SK-N-SH (cell line): ENCODE measurements at regions of chr18 and their contacts with region 1.

Region 1: GRCh38 chr18:62584241-62585120 is 61.7 kb downstream of the ZCCHC2 start:
- DNase-seq: peak; percentile 88
- H3K4me3 ChIP-seq: peak overlapping the region; percentile 23 to 33
- H3K27ac ChIP-seq: peak overlapping the region in 1 of 2 experiments; percentile 53; a peak in 1 of 4 replicates
- H3K4me1 ChIP-seq: peaks cover 3 to 9% of the 10 kb centered on the region in 2 experiments; a peak in 2 of 4 replicates
- H3K27me3 ChIP-seq: no peaks in the 10 kb centered on the region
- CTCF ChIP-seq: peak; percentile 99
- EP300 ChIP-seq: no peak
- RAD21 ChIP-seq: peak; percentile 90

Region 2: GRCh38 chr18:62118328-62118727 is 466.2 kb before region 1 on chr18:
- CTCF ChIA-PET with region 1: no interaction called
- POLR2A ChIA-PET with region 1: no interaction called
- DNase-seq: no peak
- H3K4me3 ChIP-seq: no peak overlapping the region
- H3K27ac ChIP-seq: peak overlapping the region in 1 of 2 experiments; percentile 6; a peak in 1 of 4 replicates
- H3K4me1 ChIP-seq: no peaks in the 10 kb centered on the region
- H3K27me3 ChIP-seq: no peaks in the 10 kb centered on the region
- CTCF ChIP-seq: no peak
- EP300 ChIP-seq: no peak
- RAD21 ChIP-seq: no peak

Region 3: DNA sequence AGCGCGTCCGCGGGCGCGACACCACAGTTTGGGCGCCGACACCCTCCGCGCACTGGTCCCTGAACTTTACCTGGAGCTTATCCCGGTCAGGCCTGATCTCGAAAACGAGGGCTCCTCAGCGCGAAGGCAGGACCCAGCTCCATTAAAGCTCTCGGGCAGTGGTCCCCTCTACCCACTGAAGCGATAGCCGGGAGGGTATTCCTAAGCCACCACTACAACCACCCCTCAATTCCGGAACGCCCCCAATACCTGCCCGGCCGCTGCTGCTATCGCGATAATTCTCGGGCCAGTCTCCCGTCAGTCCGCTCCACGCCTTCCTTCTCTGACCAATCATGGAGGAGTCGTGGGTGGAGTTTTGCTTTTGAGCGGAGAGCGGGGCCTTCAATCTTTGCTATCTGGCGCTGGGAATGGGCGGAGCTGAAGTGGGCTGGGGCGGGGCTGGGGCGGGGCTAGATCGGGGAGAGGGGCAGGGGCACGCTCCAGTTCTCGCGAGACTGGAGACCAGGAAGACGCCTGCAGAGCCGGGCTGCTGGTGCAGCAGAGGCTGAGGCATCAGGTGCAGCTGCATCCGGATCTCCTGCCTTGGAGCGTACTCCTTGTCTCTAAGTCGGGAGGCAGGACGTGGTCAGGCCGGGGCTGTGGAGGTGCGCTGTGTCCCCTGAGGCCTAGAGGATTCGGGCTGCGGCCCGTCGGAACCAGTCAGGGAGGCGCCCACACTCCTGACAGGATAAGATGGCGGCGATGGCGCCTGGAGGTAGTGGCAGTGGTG is 397.5 kb before region 1 on chr18 and contains the starts of genes PIGN and RELCH:
- CTCF ChIA-PET with region 1: interaction called, 13 read pairs
- POLR2A ChIA-PET with region 1: no interaction called
- DNase-seq: peak; percentile 95
- H3K4me3 ChIP-seq: peak within 1 kb of the TSS; percentile 97 to 100
- H3K27ac ChIP-seq: peak within 1 kb of the TSS; percentile 66 to 89
- H3K4me1 ChIP-seq: peaks cover 9 to 17% of the 10 kb centered on the region in 2 experiments; a peak in 3 of 4 replicates
- H3K27me3 ChIP-seq: no peaks in the 10 kb centered on the region
- CTCF ChIP-seq: no peak
- EP300 ChIP-seq: no peak
- RAD21 ChIP-seq: no peak
- polyA plus RNA-seq, gene PIGN: 6.1 and 10.4 TPM in 2 replicates
- polyA plus RNA-seq, gene RELCH: 7.4 and 11.0 TPM in 2 replicates

Region 4: GRCh38 chr18:62522504-62523254 is 61.8 kb before region 1 on chr18 and contains the start of gene ZCCHC2:
- CTCF ChIA-PET with region 1: interaction called, 11 read pairs
- POLR2A ChIA-PET with region 1: no interaction called
- DNase-seq: peak; percentile 96
- H3K4me3 ChIP-seq: peak within 1 kb of the TSS; percentile 90 to 96
- H3K27ac ChIP-seq: peak within 1 kb of the TSS; percentile 86 to 93
- H3K4me1 ChIP-seq: peaks cover 10 to 18% of the 10 kb centered on the region in 2 experiments; a peak in 3 of 4 replicates
- H3K27me3 ChIP-seq: no peaks in the 10 kb centered on the region
- CTCF ChIP-seq: no peak
- EP300 ChIP-seq: peak in 1 of 2 experiments; percentile 38; a peak in 1 of 4 replicates
- RAD21 ChIP-seq: no peak
- polyA plus RNA-seq, gene ZCCHC2: 6.7 and 7.3 TPM in 2 replicates

Region 5: DNA sequence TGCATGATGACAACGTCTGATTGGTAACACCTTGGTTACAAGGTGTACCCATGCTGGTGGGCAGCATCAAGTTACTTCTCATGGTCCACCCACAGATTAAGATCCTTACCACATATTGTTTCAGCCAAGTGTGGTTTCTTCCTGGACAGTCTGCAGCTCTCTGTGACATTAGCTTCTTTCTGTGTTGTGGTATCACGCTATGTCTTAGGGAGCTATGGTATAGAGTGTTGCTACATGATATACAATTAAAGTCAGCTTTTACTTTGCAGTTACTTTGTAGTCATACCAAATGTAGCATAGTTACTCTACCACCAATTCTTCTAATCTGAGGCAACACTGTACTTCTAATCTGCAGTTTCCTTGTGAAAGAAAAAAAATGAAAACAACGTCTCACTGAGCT is 12.8 kb before region 1 on chr18:
- CTCF ChIA-PET with region 1: interaction called, 24 read pairs
- POLR2A ChIA-PET with region 1: no interaction called
- DNase-seq: no peak
- H3K4me3 ChIP-seq: no peak overlapping the region
- H3K27ac ChIP-seq: no peak overlapping the region
- H3K4me1 ChIP-seq: no peaks in the 10 kb centered on the region
- H3K27me3 ChIP-seq: no peaks in the 10 kb centered on the region
- CTCF ChIP-seq: no peak
- EP300 ChIP-seq: no peak
- RAD21 ChIP-seq: no peak

Region 6: DNA sequence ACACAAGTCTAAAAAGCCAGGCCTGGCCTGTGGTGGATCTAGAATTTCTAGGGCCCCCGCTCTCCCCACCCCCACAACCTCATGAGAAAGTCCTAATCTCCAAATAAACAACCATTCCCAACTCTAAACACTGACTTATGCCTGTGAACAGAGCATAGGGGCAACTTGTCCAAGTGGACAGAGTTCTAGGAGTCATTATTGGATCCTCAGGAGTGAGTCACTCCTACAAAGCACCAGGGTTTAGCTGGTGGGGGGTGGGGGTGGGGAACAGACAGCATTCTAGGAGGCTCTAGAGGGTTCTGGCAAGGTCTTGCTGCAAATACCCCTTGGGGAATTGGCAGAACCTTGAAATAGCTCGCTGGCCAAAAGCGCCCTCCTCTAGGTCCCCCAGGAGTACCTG is 21.6 kb after region 1 on chr18:
- CTCF ChIA-PET with region 1: interaction called, 11 read pairs
- POLR2A ChIA-PET with region 1: no interaction called
- DNase-seq: no peak
- H3K4me3 ChIP-seq: no peak overlapping the region
- H3K27ac ChIP-seq: no peak overlapping the region
- H3K4me1 ChIP-seq: no peaks in the 10 kb centered on the region; a peak in 1 of 4 replicates
- H3K27me3 ChIP-seq: no peaks in the 10 kb centered on the region
- CTCF ChIP-seq: no peak
- EP300 ChIP-seq: no peak
- RAD21 ChIP-seq: no peak

Region 7: GRCh38 chr18:62957885-62958472 is 373.5 kb after region 1 on chr18:
- CTCF ChIA-PET with region 1: interaction called, 56 read pairs
- POLR2A ChIA-PET with region 1: no interaction called
- DNase-seq: no peak
- H3K4me3 ChIP-seq: no peak overlapping the region
- H3K27ac ChIP-seq: no peak overlapping the region
- H3K4me1 ChIP-seq: no peaks in the 10 kb centered on the region
- H3K27me3 ChIP-seq: no peaks in the 10 kb centered on the region
- CTCF ChIP-seq: peak; percentile 73
- EP300 ChIP-seq: no peak
- RAD21 ChIP-seq: peak; percentile 58

Region 8: DNA sequence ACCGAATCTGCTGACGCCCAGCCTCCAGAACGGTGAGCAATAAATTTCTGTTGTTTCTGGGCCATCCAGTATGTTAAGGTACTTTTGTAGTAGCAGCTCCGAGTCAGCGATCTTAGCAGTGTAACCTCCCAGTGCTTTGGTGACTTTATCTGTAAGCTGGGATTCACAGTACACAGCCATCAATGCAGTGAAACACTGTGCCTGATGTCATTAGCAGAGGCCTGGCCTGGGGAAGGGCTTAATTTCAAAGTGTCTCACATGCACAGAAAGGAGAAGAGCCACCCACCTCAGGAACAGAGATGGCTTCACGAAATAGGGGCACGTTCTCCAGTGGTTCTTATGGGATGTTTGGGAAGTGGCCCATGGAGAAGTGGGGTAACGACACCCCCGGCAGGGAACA is 412.1 kb after region 1 on chr18:
- CTCF ChIA-PET with region 1: interaction called, 12 read pairs
- POLR2A ChIA-PET with region 1: no interaction called
- DNase-seq: no peak
- H3K4me3 ChIP-seq: no peak overlapping the region
- H3K27ac ChIP-seq: no peak overlapping the region
- H3K4me1 ChIP-seq: no peaks in the 10 kb centered on the region
- H3K27me3 ChIP-seq: no peaks in the 10 kb centered on the region
- CTCF ChIP-seq: no peak
- EP300 ChIP-seq: no peak
- RAD21 ChIP-seq: no peak